Gastrocnemius medialis (tissue), 4 donors: ENCODE measurements at regions of chr9 and their contacts with region 1.

Region 1: GRCh38 chr9:116572095-116572748 is 114.9 kb upstream of the TRIM32 start:
- DNase-seq: peak; percentile 76 to 88
- ATAC-seq: peak; percentile 85 to 98
- H3K4me3 ChIP-seq: peak overlapping the region in 1 of 4 donors; percentile 10
- H3K27ac ChIP-seq: no peak overlapping the region
- H3K4me1 ChIP-seq: peaks cover 7 to 10% of the 10 kb centered on the region in 2 donors
- H3K27me3 ChIP-seq: no peaks in the 10 kb centered on the region
- CTCF ChIP-seq: peak; percentile 84 to 91 (median 88)
- POLR2A ChIP-seq: no peak

Region 2: GRCh38 chr9:115591584-115591984 is 980.6 kb before region 1 on chr9:
- in situ Hi-C with region 1: loop called in 3 of 4 experiments (anchors 5 to 10 kb)
- intact Hi-C with region 1: loop called (anchors 1 kb)
- DNase-seq: peak; percentile 62 to 70
- ATAC-seq: peak; percentile 97 to 99
- H3K4me3 ChIP-seq: no peak overlapping the region
- H3K27ac ChIP-seq: peak overlapping the region; percentile 52 to 77 (median 65)
- H3K4me1 ChIP-seq: peaks cover 0 to 6% of the 10 kb centered on the region in 2 donors
- H3K27me3 ChIP-seq: peaks cover 4 to 10% (median 9%) of the 10 kb centered on the region in 3 donors
- CTCF ChIP-seq: peak; percentile 48 to 80 (median 78)
- POLR2A ChIP-seq: no peak

Region 3: DNA sequence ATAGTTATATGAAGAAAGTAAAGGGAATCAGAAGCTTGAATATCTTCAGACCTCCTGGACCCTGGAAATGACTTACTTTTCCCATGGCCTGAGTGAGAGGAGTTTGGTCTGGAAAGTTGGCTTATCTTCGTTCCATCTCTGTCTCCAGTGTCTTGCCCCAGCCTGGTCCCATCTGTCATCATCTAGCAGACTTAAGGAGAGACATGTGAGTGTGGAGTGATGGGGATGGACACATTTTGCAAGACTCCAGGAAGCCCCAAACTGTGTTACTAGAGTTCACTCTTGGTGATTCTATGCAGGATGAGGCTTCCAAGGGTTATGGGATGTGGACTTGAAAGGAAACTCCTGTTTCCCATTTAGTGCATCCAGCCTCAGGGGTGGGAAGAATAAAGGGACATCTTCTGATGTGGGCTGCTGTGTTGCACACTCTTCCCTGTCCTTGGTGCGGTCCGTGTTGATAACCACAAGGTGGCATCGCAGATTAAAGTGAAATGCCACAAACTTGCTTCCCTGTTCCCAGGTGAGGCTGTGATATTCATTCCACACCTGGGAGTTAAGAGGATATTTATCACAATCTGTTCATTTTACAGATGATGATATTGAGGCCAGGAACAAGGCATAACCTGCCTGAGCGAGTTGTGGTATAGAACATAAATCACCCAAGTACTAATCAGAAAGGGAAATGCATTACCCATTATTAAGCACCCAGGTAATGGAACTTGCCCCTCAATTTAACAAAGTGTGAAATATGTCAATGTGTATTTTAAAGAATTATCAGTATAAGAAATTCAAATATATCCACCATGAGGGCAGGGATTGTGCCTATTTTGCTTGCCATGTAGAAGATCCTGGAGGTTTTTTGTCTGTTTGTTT is 688.5 kb before region 1 on chr9:
- in situ Hi-C with region 1: loop called in 1 of 4 experiments (anchors 25 kb)
- intact Hi-C with region 1: loop called (anchors 2 kb)
- DNase-seq: no peak
- ATAC-seq: peak; percentile 62 to 66
- H3K4me3 ChIP-seq: no peak overlapping the region
- H3K27ac ChIP-seq: no peak overlapping the region
- H3K4me1 ChIP-seq: no peaks in the 10 kb centered on the region
- H3K27me3 ChIP-seq: no peaks in the 10 kb centered on the region
- CTCF ChIP-seq: peak; percentile 34 to 55 (median 41)
- POLR2A ChIP-seq: no peak

Region 4: GRCh38 chr9:116163293-116164055 is 408.7 kb before region 1 on chr9:
- in situ Hi-C with region 1: loop called in 2 of 4 experiments (anchors 10 to 25 kb)
- intact Hi-C with region 1: loop called (anchors 5 kb)
- DNase-seq: no peak
- ATAC-seq: peak in 1 of 2 donors; percentile 58
- H3K4me3 ChIP-seq: no peak overlapping the region
- H3K27ac ChIP-seq: no peak overlapping the region
- H3K4me1 ChIP-seq: no peaks in the 10 kb centered on the region
- H3K27me3 ChIP-seq: no peaks in the 10 kb centered on the region
- CTCF ChIP-seq: peak in 3 of 5 experiments; percentile 15 to 48 (median 39)
- POLR2A ChIP-seq: no peak

Region 5: GRCh38 chr9:116450378-116451139 is 121.7 kb before region 1 on chr9:
- in situ Hi-C with region 1: loop called in 1 of 4 experiments (anchors 25 kb)
- intact Hi-C with region 1: no loop called
- DNase-seq: no peak
- ATAC-seq: no peak
- H3K4me3 ChIP-seq: no peak overlapping the region
- H3K27ac ChIP-seq: no peak overlapping the region
- H3K4me1 ChIP-seq: no peaks in the 10 kb centered on the region
- H3K27me3 ChIP-seq: no peaks in the 10 kb centered on the region
- CTCF ChIP-seq: no peak
- POLR2A ChIP-seq: no peak

Region 6: GRCh38 chr9:116616304-116616914 is 44.2 kb after region 1 on chr9:
- in situ Hi-C with region 1: no loop called
- intact Hi-C with region 1: no loop called
- DNase-seq: no peak
- ATAC-seq: no peak
- H3K4me3 ChIP-seq: no peak overlapping the region
- H3K27ac ChIP-seq: no peak overlapping the region
- H3K4me1 ChIP-seq: no peaks in the 10 kb centered on the region
- H3K27me3 ChIP-seq: no peaks in the 10 kb centered on the region
- CTCF ChIP-seq: no peak
- POLR2A ChIP-seq: no peak

Region 7: GRCh38 chr9:116661037-116661954 is 89.1 kb after region 1 on chr9:
- in situ Hi-C with region 1: loop called in 1 of 4 experiments (anchors 10 kb)
- intact Hi-C with region 1: no loop called
- DNase-seq: peak in 1 of 2 donors; percentile 23
- ATAC-seq: peak; percentile 90 to 95
- H3K4me3 ChIP-seq: no peak overlapping the region
- H3K27ac ChIP-seq: no peak overlapping the region
- H3K4me1 ChIP-seq: peaks cover 5 to 32% of the 10 kb centered on the region in 2 donors
- H3K27me3 ChIP-seq: no peaks in the 10 kb centered on the region
- CTCF ChIP-seq: peak; percentile 69 to 76 (median 73)
- POLR2A ChIP-seq: no peak